Heart right ventricle (tissue), 16 donors: ENCODE measurements at regions of chr12 and their contacts with region 1.

Region 1: DNA sequence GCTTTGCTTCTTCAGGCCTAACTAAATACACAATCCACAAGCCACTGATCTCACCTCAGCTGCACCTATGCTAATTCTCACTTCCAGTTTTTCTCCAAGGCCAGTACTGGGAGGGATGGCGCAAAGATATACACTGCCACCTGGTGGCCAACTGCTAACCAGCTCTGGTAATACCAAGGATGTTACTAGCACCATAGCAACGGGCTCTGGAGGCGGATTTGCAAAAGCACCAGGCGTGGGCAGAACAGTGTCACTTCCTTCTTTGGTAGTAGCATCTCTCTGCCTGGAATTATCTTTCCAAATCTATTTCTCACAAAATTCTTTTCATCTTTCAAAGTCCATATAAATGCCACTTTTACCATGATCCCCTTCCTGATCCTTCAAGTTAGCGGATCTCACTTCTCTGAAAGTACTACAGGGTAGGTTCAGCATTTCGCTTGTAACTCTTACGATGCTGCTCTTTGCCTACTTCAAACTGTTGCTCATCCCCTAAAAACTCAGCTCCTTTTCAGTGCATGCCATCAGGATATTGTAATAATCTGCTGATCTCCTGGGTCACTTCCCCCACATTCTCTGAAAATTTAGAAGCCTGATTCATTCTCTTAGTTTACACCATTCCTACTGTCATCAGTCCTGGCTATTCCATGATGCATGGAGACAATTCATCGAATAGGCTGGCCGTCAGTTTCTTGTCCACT is 37.1 kb upstream of the FOXJ2 start:
- DNase-seq: peak; percentile 61 to 89
- ATAC-seq: peak; percentile 95 to 100 (median 99)
- H3K4me3 ChIP-seq: no peak overlapping the region
- H3K27ac ChIP-seq: peak overlapping the region in 5 of 10 donors; percentile 18 to 71 (median 52)
- H3K4me1 ChIP-seq: peaks cover 0 to 40% (median 0%) of the 10 kb centered on the region in 9 donors
- H3K27me3 ChIP-seq: no peaks in the 10 kb centered on the region
- CTCF ChIP-seq: peak; percentile 77 to 91 (median 88)

Region 2: GRCh38 chr12:7859552-7859951 is 135.9 kb before region 1 on chr12:
- intact Hi-C with region 1: loop called (anchors 2 to 5 kb)
- DNase-seq: no peak
- ATAC-seq: no peak
- H3K4me3 ChIP-seq: no peak overlapping the region
- H3K27ac ChIP-seq: no peak overlapping the region
- H3K4me1 ChIP-seq: peaks cover 0 to 14% (median 3%) of the 10 kb centered on the region in 9 donors
- H3K27me3 ChIP-seq: peaks cover 0 to 38% (median 11%) of the 10 kb centered on the region in 7 donors
- CTCF ChIP-seq: no peak

Region 3: DNA sequence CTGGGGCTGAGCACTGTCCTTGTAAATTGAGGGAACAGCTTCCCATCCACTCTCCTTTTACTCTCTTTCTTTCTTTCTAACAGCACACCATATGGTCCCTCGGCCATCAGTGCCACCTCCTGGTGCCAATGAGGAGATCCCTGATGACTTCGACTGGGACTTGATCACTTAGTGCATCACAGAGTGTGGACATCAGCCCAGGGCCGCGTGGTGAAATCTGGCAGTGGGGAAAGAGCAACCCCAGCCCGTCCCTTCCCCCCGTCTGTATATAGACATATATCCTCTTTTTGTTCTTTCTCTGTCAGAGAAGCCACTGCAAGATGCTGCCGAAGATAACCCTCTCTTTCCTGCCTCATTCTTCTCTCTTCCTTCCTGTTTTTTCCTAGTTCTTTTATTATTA is 57.3 kb after region 1 on chr12:
- intact Hi-C with region 1: loop called in 1 of 10 experiments (anchors 2 kb)
- DNase-seq: no peak
- ATAC-seq: peak in 3 of 8 donors; percentile 34 to 57 (median 54)
- H3K4me3 ChIP-seq: no peak overlapping the region
- H3K27ac ChIP-seq: peak overlapping the region in 3 of 10 donors; percentile 27 to 61 (median 52)
- H3K4me1 ChIP-seq: peaks cover 0 to 61% (median 0%) of the 10 kb centered on the region in 9 donors
- H3K27me3 ChIP-seq: no peaks in the 10 kb centered on the region
- CTCF ChIP-seq: no peak